Astrocyte of the cerebellum (primary cell): ENCODE measurements at regions of chr5 and their contacts with region 1.

Region 1: DNA sequence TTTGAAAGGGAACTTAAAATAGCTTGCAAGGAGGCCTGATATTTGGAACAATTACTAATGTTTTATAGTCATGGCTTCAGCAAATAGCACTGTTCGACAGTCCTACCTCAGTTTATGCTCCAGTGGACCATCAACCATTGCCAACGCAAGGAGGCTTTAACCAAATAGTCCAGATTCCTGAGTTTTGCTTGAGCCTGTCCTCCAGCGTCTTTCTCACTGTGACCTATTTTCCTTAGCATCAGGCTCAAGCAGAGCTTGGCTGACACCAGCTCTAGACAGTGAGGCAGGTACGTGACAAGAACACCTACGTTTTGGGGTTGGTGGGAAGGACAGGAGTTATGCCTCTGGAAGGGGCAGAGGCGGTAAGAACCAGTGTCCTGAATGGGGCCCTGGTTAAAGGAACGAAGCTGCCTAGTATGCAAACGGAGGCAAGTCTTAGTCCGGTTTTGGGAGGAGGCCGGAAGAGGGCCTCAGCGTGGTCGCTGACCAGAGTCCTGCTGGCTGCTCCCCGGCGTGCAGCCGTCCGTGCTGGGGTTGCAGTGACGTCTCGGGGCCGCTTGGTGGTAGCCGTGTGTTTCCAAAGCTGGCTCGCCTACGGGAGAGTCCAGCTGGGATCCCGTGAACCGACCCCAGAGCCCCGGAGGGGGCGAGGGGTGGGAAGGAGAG is 998 bp upstream of the FGF18 start:
- DNase-seq: peak; percentile 72
- H3K4me3 ChIP-seq: peak overlapping the region; percentile 49
- CTCF ChIP-seq: peak; percentile 86

Region 2: GRCh38 chr5:171102877-171103610 is 315.4 kb before region 1 on chr5:
- in situ Hi-C with region 1: no loop called
- DNase-seq: no peak
- H3K4me3 ChIP-seq: no peak overlapping the region
- CTCF ChIP-seq: no peak

Region 3: DNA sequence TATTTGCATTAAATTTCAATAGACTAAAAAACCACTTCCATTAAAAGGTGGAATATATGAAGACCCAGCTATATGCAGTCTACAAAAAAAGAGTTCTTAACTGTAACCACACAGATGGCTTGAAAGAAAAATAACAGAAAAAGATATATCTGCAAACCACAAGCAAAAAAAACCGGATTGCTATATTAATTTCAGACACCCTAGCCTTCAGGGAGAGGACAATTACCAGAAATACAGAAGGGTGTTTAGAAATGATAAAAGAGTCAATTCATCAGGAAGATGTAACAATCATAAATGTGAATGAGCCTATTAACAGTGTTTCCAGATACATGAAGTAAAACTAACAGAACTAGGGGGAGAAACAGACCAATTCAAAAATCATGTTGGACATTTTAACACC is 310.2 kb after region 1 on chr5:
- in situ Hi-C with region 1: no loop called
- DNase-seq: no peak
- H3K4me3 ChIP-seq: no peak overlapping the region
- CTCF ChIP-seq: no peak

Region 4: GRCh38 chr5:172179361-172179989 is 761.0 kb after region 1 on chr5:
- in situ Hi-C with region 1: loop called (anchors 10 kb)
- DNase-seq: peak; percentile 60
- H3K4me3 ChIP-seq: no peak overlapping the region
- CTCF ChIP-seq: no peak